Ascending aorta (tissue), 2 donors: ENCODE measurements at regions of chr11 and their contacts with region 1.

Region 1: DNA sequence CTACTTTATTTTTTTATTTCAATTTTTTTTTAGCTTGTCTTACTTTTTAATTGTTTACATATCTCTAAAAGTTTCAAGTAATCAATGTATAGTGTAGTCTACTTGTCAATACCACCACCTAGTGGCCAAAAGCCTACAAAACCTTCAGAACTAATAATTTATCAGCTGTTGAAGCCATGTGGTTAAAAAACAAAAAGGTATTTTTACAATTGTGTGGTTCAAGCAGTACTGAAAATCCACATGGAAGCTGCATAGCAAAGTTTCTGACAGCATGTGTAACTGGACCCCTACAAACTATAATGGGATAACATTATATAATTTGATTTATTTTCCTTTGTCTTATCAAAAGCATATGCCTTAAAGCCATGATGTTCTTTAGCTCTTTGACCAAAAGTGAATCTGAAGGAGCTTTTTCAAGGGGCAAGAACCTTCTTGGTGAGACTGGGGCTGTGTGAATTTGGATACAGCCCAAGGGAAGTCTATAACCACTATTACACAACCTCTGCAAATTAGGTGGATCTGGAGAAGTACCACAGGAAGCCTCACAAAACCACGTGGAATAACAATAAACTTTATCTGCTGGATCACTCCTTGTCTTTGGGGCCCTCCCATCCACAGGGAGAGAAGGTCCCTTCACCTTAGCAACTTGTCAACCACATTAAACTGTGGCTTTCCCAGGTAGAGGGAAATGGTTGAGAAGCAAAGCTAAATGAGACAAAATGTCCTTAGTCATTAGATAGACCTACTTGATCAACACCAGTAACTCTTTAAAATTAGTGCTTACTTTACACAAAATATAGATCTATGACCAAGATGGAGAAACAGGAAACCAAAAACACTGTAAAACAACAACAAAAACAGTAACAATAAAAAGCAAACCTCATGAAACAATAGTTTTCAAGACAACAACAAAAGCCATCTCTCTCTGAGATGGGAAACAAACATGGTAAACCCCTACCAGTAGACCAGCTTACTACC is 9.9 kb downstream of the NARS2 start:
- DNase-seq: no peak
- H3K4me3 ChIP-seq: no peak overlapping the region
- H3K27ac ChIP-seq: no peak overlapping the region
- H3K4me1 ChIP-seq: peaks cover 6 to 26% of the 10 kb centered on the region in 2 donors
- H3K27me3 ChIP-seq: no peaks in the 10 kb centered on the region
- CTCF ChIP-seq: peak; percentile 48 to 76 (median 64)

Region 2: DNA sequence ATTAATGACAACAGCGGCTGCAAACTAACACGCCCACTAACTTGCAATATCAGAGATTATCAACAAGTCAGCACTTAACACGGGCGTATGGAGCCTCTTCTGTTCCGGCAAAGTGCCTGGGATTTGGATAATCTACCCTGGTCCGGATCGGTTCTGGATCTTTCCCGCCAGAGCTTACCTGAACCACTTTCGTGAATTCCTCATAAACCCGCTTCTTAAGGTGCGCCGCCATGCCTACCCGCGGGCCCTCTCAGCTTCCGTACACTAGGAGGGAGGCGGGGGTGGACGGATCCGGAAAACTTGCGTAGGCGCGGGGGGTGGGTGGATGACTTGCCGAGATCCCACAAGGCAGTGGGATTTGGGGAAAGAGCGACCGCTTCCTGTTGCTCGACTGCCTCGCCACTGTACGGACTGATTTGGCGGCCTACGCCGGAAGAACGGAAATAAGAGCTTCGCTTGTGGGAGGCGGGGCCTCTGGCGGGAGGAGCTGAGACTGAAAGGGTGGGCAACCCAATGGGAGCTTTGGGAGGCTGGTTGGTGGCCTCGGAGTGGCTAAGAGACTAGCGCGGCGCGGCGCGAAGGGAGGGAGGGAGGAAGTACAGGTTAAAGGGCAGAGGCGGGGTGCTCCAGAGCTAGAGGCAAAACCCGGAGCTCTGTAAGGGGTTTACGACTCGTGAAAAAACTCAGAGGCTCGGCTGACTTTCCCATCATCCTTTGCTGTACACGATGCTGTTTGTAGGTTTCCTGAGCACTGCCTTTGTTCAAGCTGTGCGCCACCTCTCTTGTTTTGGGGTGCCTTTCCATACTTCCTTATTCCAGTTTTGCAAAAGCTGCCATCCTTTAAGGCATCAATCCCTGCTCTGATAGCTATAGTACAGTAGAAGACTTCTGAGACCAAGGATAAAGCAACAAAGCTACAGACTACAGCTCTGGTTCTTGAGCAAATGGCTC is 570.1 kb before region 1 on chr11 and contains the start of gene INTS4:
- intact Hi-C with region 1: loop called (anchors 5 kb)
- DNase-seq: peak; percentile 97 to 99
- H3K4me3 ChIP-seq: peak within 1 kb of the TSS; percentile 63 to 65
- H3K27ac ChIP-seq: peak within 1 kb of the TSS; percentile 79
- H3K4me1 ChIP-seq: peaks cover 0 to 11% of the 10 kb centered on the region in 2 donors
- H3K27me3 ChIP-seq: no peaks in the 10 kb centered on the region
- CTCF ChIP-seq: peak in 1 of 3 experiments; percentile 15
- total RNA-seq, gene INTS4: 10.7 TPM

Region 3: GRCh38 chr11:78045851-78046485 is 518.8 kb before region 1 on chr11:
- intact Hi-C with region 1: loop called (anchors 10 kb)
- DNase-seq: peak in 1 of 2 donors; percentile 87
- H3K4me3 ChIP-seq: peak overlapping the region; percentile 52 to 73
- H3K27ac ChIP-seq: peak overlapping the region; percentile 41 to 52
- H3K4me1 ChIP-seq: peaks cover 0 to 2% of the 10 kb centered on the region in 2 donors
- H3K27me3 ChIP-seq: no peaks in the 10 kb centered on the region
- CTCF ChIP-seq: peak; percentile 88 to 99 (median 97)

Region 4: DNA sequence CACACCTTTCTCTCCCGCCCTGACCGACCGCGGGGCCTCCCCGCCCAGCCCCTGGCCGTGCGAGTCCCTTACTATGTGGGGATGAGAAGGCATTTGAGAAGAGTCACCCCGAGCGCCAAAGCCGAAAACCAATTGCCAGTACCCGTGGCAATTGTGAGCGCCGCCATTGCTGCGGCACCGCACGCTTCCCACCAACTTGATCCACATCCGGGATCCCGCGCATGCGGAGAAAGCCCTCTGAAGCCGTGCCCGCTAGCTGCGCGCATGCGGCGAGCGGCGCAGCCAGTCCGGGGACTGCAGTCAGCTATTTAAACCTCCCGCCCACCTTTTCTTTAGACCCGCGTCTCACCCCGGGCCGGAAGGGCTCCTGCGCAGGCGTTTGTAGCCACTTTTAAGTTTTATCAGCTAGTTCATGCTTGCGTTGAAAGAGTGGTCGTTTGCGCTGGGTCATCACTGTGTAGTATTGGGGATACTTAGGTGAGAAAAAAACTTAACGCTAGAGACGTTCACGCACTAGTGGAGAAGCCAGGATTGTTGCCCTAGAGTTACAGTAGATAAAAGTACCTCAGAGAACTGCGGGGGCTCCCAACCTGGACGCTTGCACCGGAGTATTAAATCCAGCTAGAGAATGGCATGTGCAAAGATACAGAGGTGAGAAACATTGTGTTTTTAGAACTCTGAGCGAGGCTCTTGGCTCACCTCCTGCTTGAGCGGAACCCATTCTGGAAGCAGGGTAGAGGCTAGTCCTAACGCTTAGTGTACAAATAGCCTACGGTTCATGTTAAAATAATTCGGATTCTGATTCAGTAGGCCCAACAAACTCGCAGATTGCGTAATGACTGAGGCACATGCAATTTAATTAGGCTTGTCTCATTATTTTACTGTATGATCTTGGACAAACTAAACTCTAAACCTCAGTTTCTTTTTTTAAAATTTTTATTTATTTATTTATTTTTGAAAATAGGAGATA is 425.1 kb before region 1 on chr11 and contains the start of gene ALG8:
- intact Hi-C with region 1: loop called (anchors 5 kb)
- DNase-seq: peak; percentile 78 to 97
- H3K4me3 ChIP-seq: peak within 1 kb of the TSS; percentile 73 to 77
- H3K27ac ChIP-seq: peak within 1 kb of the TSS; percentile 54 to 75
- H3K4me1 ChIP-seq: peaks cover 7 to 14% of the 10 kb centered on the region in 2 donors
- H3K27me3 ChIP-seq: no peaks in the 10 kb centered on the region
- CTCF ChIP-seq: no peak
- total RNA-seq, gene ALG8: 27.0 TPM

Region 5: GRCh38 chr11:78168539-78169477 is 396.0 kb before region 1 on chr11:
- intact Hi-C with region 1: loop called (anchors 10 kb)
- DNase-seq: peak; percentile 87 to 98
- H3K4me3 ChIP-seq: no peak overlapping the region
- H3K27ac ChIP-seq: peak overlapping the region; percentile 96
- H3K4me1 ChIP-seq: peaks cover 6 to 46% of the 10 kb centered on the region in 2 donors
- H3K27me3 ChIP-seq: no peaks in the 10 kb centered on the region
- CTCF ChIP-seq: no peak

Region 6: DNA sequence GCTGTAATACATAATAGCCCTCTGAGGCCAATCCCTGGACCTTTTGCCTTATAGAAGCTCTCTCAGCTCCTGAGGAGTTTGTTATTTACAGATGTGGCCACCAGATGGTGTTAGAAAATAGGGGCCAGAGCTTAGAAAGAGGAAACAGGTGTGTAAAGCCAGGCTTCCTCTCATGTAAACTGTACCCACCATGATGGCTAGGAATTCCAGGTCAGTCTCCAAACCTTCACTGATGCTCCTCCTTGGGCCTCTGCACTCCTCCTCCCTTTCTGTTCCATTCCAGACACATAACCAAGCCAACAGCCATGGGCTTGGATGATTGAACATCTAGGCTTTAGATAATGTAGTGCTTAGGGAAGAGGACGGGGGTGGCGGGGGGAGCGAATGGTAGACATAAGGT is 336.3 kb before region 1 on chr11:
- intact Hi-C with region 1: loop called (anchors 5 kb)
- DNase-seq: peak in 1 of 2 donors; percentile 61
- H3K4me3 ChIP-seq: no peak overlapping the region
- H3K27ac ChIP-seq: peak overlapping the region in 1 of 2 donors; percentile 31
- H3K4me1 ChIP-seq: peaks cover 0 to 20% of the 10 kb centered on the region in 2 donors
- H3K27me3 ChIP-seq: no peaks in the 10 kb centered on the region
- CTCF ChIP-seq: peak; percentile 21 to 59 (median 26)